Right ventricle myocardium superior (tissue), 1 donor: ENCODE measurements at regions of chr19 and their contacts with region 1.

Region 1: DNA sequence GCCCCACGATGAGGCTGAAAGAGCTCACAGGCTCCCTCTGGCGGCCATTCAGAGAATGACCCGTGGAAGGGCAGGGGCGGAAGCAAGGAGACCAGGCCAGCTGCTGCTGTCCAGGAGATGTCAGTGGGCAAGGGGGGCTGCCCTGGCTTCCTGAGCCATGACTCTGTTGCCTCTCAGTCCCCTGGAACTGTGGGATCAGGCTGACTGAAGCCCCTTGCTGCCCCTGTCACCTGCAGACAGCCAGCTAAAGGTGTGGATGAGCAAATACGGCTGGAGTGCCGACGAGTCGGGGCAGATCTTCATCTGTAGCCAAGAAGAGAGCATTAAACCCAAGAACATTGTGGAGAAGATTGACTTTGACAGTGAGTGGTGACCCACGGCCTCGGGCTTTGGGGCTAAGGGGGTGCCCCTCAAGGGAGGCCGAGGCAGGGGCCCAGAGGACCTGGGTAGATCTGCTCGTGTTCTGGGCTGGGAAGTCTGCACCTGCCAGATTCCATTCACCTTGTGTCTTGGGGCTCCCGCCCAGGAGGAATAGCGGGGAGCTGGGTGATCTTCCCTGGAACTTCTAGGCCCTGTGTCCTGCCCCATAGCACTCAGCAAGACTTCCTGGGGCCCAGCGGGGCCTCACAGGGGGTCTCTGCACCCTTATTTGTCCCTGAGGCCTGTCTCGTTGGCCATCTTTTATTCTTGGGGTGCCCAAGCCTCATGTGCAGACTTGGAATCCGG is 12.5 kb upstream of the ACTN4 start:
- DNase-seq: peak; percentile 87
- ATAC-seq: peak; percentile 65

Region 2: GRCh38 chr19:38402967-38403861 is 231.7 kb before region 1 on chr19 and contains the start of gene FAM98C:
- intact Hi-C with region 1: loop called (anchors 5 kb)
- DNase-seq: peak; percentile 98
- ATAC-seq: peak; percentile 99
- total RNA-seq, gene FAM98C: 10.5 TPM

Region 3: GRCh38 chr19:38831142-38831605 is 196.3 kb after region 1 on chr19:
- intact Hi-C with region 1: no loop called
- DNase-seq: peak; percentile 86
- ATAC-seq: peak; percentile 75

Region 4: GRCh38 chr19:38849860-38850435 is 215.0 kb after region 1 on chr19 and contains the start of gene HNRNPL:
- intact Hi-C with region 1: loop called (anchors 10 kb)
- DNase-seq: peak; percentile 99
- ATAC-seq: peak; percentile 73
- total RNA-seq, gene HNRNPL: 158 TPM